Activated CD8-positive, alpha-beta T cell treated with anti-CD3 and anti-CD28 coated beads for 36 hours (primary cell): ENCODE measurements at regions of chr16 and their contacts with region 1.

Region 1: GRCh38 chr16:81035398-81035974 is at the start of gene ATMIN:
- DNase-seq: peak; percentile 87
- ATAC-seq: peak; percentile 97
- H3K4me3 Mint-ChIP-seq: peak within 1 kb of the TSS; percentile 81
- H3K27ac Mint-ChIP-seq: peak within 1 kb of the TSS; percentile 63
- H3K4me1 Mint-ChIP-seq: peaks cover 26% of the 10 kb centered on the region
- H3K27me3 Mint-ChIP-seq: no peaks in the 10 kb centered on the region
- CTCF ChIP-seq: peak; percentile 99
- total RNA-seq, gene ATMIN: 17.9 to 19.7 TPM

Region 2: GRCh38 chr16:81006814-81007696 is 28.4 kb before region 1 on chr16 and contains the starts of genes CENPN and CMC2:
- CTCF ChIA-PET with region 1: interaction called, 50 read pairs
- POLR2A ChIA-PET with region 1: interaction called, 20 read pairs
- intact Hi-C with region 1: no loop called
- DNase-seq: peak; percentile 99
- ATAC-seq: peak; percentile 86
- H3K4me3 Mint-ChIP-seq: peak within 1 kb of the TSS; percentile 86
- H3K27ac Mint-ChIP-seq: peak within 1 kb of the TSS; percentile 100
- H3K4me1 Mint-ChIP-seq: peaks cover 41% of the 10 kb centered on the region
- H3K27me3 Mint-ChIP-seq: no peaks in the 10 kb centered on the region
- CTCF ChIP-seq: no peak
- total RNA-seq, gene CENPN: 51.7 to 54.8 TPM
- total RNA-seq, gene CMC2: 105 to 106 TPM

Region 3: DNA sequence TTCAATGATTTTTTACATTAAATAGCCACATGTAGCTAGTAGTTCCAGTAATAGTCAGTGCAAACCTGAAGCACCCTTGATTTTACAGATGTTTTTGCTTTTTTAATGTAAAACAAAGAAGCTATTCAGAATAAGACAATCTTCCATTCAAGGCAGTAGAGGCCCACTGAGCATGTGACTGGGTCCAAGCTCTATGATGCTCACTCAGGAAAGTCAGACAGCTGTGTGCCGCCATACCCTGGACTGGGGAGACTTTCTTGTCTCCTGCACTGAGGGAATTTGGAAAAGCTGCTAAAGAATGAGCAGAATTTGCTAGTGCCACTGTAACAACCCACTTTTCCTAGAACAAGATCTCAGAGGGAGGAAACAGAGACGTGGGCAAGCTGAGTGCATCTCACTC is 17.0 kb before region 1 on chr16:
- CTCF ChIA-PET with region 1: interaction called, 42 read pairs
- POLR2A ChIA-PET with region 1: interaction called, 4 read pairs
- intact Hi-C with region 1: no loop called
- DNase-seq: no peak
- ATAC-seq: no peak
- H3K4me3 Mint-ChIP-seq: no peak overlapping the region
- H3K27ac Mint-ChIP-seq: no peak overlapping the region
- H3K4me1 Mint-ChIP-seq: no peaks in the 10 kb centered on the region
- H3K27me3 Mint-ChIP-seq: no peaks in the 10 kb centered on the region
- CTCF ChIP-seq: no peak

Region 4: DNA sequence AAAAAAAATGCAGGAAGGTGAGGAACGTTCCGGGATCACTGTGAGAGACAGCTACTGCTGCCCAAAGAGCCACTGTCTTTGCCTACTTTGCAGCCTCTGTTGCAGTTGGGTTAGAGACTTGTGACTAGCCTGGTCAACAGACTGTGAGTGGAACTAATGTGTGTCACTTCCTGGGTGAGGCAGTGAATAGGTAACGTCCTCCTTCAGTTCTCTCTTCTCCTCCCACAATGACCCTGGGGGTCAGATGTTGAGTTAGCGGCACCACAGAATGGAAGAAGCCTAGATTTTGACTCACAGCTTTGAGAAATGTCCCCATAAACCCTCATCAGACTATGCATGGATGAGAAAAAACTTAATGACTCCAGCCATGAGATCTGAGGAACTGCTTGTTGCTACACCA is 36.3 kb after region 1 on chr16:
- CTCF ChIA-PET with region 1: interaction called, 30 read pairs
- POLR2A ChIA-PET with region 1: interaction called, 4 read pairs
- intact Hi-C with region 1: no loop called
- DNase-seq: no peak
- ATAC-seq: no peak
- H3K4me3 Mint-ChIP-seq: no peak overlapping the region
- H3K27ac Mint-ChIP-seq: no peak overlapping the region
- H3K4me1 Mint-ChIP-seq: peaks cover 1% of the 10 kb centered on the region
- H3K27me3 Mint-ChIP-seq: peaks cover 2% of the 10 kb centered on the region
- CTCF ChIP-seq: no peak

Region 5: DNA sequence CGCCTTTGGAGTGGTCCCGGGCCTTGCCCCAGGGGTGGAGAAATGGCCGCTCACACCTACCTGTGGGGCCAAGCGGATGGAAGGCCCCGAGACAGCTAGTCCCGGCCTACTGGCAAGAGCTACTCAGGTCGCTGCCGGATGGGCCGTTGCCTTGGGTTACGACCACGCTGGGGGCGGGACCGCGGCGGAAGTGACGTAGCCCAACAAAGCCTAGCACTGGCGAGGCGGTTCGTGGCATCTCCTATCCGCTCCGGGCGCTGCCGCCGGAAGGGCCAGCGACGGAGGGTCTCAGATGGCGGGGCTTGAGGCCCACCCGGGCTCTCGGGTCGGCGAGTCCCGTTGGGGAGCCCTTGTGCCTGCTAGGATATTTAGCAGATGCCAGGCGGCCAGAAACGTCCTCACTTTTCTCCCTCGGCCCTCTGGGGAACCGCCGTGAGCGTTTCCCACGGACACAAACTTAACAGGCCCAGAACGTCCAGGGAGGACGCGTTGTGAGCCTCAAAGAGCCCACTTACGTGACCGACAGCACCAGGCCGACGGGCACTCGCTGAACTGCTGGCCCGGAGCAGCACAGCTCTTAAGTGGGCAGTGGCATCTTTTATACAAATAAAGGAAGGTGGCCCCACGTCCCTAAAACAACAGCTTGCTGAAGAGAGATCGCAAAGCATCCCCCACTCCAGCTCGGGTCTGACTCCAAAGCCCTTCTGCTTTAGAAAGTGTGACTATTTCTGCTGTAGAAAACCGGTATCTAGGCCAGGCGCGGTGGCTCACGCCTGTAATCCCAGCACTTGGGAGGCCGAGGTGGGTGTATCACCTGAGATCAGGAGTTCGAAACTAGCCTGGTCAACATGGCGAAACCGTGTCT is 41.8 kb after region 1 on chr16 and contains the start of gene C16orf46:
- CTCF ChIA-PET with region 1: interaction called, 30 read pairs
- POLR2A ChIA-PET with region 1: interaction called, 4 read pairs
- intact Hi-C with region 1: no loop called
- DNase-seq: peak; percentile 99
- ATAC-seq: peak; percentile 85
- H3K4me3 Mint-ChIP-seq: no peak within 1 kb of the TSS
- H3K27ac Mint-ChIP-seq: no peak within 1 kb of the TSS
- H3K4me1 Mint-ChIP-seq: peaks cover 3% of the 10 kb centered on the region
- H3K27me3 Mint-ChIP-seq: peaks cover 2% of the 10 kb centered on the region
- CTCF ChIP-seq: no peak
- total RNA-seq, gene C16orf46: 0.59 to 0.60 TPM

Region 6: DNA sequence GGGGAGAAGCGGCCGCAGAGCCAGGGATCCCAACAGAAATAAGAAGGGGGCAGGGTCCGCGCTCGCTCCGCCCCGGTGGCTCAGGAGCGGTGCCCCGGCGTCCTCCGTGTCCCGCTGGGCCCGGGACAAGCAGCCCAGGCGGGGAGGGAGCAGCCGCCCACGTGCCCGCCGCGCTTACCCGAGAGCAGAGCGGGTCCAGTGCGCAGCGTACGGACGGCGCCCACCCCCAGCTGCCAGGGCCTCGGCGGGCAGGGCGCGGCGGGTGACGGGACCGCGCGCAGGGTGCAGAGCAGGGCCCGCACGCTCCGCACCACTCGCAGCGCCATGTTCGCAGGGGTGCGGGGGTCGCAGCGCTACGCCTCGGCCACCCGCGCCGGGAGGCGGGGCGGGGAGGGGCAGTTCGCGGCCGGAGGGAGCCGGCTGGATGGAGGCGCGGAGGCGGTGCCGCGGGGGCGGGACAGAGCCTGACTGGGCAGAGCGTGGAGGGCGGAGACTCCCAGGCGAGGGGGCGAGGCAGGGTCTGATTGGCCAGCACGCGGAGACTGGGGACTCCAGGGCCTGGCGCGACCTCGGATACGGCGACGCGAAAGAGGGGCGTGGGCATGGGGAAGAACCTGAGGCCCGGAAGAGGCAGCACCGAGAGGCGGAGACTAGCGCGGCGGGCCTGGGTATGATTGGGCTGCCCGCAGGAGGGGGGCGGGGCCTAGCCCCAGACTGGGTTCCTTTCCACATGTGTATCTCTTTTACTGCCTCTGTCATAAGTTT is 60.6 kb after region 1 on chr16 and contains the start of gene GCSH:
- CTCF ChIA-PET with region 1: interaction called, 20 read pairs
- POLR2A ChIA-PET with region 1: interaction called, 3 read pairs
- intact Hi-C with region 1: no loop called
- DNase-seq: peak; percentile 99
- ATAC-seq: peak; percentile 99
- H3K4me3 Mint-ChIP-seq: peak within 1 kb of the TSS; percentile 75
- H3K27ac Mint-ChIP-seq: peak within 1 kb of the TSS; percentile 64
- H3K4me1 Mint-ChIP-seq: peaks cover 14% of the 10 kb centered on the region
- H3K27me3 Mint-ChIP-seq: no peaks in the 10 kb centered on the region
- CTCF ChIP-seq: no peak
- total RNA-seq, gene GCSH: 21.0 to 25.3 TPM